Heart right ventricle (tissue), 16 donors: ENCODE measurements at regions of chr1 and their contacts with region 1.

Region 1: DNA sequence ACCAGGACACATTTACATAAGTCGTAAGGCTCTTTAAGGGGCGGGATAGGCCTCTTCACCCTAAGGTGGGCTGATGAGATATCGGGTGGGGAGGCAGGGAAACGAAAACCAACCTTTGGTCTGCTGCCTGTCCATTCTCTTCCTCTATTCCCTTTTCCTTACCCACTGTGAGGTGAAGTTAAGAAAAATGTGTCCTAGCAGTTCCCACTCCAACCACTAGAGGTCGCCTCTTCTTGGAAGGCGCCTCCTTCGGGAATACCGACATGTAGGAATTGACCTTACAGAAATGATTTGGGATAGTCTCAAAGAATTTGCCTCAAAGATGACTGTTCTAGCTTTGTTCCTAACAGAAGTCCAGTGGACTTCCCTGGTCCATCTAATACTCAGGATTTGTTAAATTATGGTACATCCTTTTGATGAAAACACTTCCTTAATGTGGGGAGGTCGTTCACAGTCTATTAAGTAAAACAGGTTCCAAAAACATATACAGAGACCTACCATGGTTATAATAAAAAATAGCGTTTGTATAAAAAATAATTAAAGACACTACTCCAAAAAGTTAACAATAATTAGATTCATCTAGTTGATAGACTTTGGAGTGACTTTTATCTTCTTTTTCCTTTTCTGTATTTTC is 14.1 kb downstream of the AZIN2 start:
- DNase-seq: peak in 1 of 2 donors; percentile 63
- ATAC-seq: peak in 4 of 8 donors; percentile 22 to 55 (median 41)
- H3K4me3 ChIP-seq: no peak overlapping the region
- H3K27ac ChIP-seq: no peak overlapping the region
- H3K4me1 ChIP-seq: peaks cover 0 to 35% (median 7%) of the 10 kb centered on the region in 9 donors
- H3K27me3 ChIP-seq: no peaks in the 10 kb centered on the region
- CTCF ChIP-seq: peak; percentile 92 to 99 (median 98)

Region 2: GRCh38 chr1:33430692-33431593 is 335.9 kb after region 1 on chr1 and contains the start of gene PHC2:
- intact Hi-C with region 1: loop called in 1 of 10 experiments (anchors 10 kb)
- DNase-seq: peak; percentile 97 to 98
- ATAC-seq: peak; percentile 96 to 98 (median 97)
- H3K4me3 ChIP-seq: peak within 1 kb of the TSS; percentile 69 to 95 (median 76)
- H3K27ac ChIP-seq: peak within 1 kb of the TSS; percentile 62 to 89 (median 86)
- H3K4me1 ChIP-seq: peaks cover 0 to 79% (median 50%) of the 10 kb centered on the region in 9 donors
- H3K27me3 ChIP-seq: no peaks in the 10 kb centered on the region
- CTCF ChIP-seq: peak in 8 of 9 donors; percentile 32 to 66 (median 42)
- total RNA-seq, gene PHC2: 96.7 to 136 (median 102) TPM

Region 3: DNA sequence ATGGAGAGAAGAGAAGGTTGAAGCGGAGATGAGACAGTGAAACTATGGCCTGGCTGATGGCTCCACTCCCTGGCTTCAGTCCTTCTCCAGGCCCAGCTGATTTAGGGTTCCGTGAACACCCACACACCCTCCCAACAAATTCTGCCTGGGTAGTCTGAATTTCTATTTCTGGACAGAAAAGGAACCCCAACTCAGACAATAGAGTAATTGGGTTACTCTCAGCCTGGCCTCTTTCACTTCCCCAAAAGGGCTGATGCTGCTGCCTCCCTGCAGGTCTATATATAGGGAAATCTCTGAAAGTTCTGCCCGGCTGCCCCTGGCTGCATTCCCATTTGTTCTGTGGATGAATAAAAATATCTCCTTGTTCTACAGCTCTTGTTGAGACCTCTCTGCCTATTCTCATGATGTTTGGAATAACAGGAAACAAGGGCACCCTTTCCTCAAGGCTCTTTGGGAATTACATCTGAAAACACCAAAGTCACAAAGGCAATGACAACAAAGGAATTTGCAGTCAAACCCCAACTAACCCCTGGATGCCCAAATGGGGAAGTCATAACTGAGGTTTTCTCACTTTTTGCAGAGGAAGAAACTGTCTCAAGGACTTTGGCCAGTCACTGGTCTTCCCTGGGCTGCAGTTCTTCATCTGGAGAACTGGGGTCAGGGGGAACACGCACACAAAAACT is 366.0 kb after region 1 on chr1:
- intact Hi-C with region 1: loop called in 2 of 10 experiments (anchors 5 to 10 kb)
- DNase-seq: peak; percentile 44 to 77
- ATAC-seq: peak; percentile 61 to 87 (median 75)
- H3K4me3 ChIP-seq: no peak overlapping the region
- H3K27ac ChIP-seq: peak overlapping the region; percentile 59 to 93 (median 84)
- H3K4me1 ChIP-seq: peaks cover 2 to 74% (median 35%) of the 10 kb centered on the region in 9 donors
- H3K27me3 ChIP-seq: no peaks in the 10 kb centered on the region
- CTCF ChIP-seq: no peak

Region 4: DNA sequence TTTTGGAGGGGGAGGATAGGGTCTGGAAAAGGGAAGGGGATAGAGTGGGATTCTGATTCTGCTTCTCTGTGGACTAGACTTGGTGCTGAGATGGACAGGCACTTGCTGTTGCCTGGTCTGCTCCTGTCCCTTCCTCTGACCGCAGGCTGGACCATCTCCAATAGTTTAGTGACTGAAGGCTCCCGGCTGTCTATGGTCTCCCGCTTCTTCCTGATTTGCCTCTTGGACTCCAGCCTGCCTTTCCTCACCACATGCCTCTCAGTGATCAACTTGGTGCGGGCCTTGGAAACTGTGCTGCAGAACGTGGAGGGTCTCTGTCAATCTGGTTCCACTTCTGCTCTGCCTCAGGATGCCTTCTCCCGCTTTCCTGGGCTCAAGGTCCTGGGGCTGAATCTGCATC is 371.1 kb after region 1 on chr1:
- intact Hi-C with region 1: loop called in 2 of 10 experiments (anchors 5 to 10 kb)
- DNase-seq: peak in 1 of 2 donors; percentile 60
- ATAC-seq: peak in 4 of 8 donors; percentile 12 to 57 (median 38)
- H3K4me3 ChIP-seq: no peak overlapping the region
- H3K27ac ChIP-seq: peak overlapping the region in 2 of 10 donors; percentile 14 to 15
- H3K4me1 ChIP-seq: peaks cover 0 to 47% (median 28%) of the 10 kb centered on the region in 9 donors
- H3K27me3 ChIP-seq: no peaks in the 10 kb centered on the region
- CTCF ChIP-seq: no peak

Region 5: GRCh38 chr1:33616773-33617172 is 521.7 kb after region 1 on chr1:
- intact Hi-C with region 1: loop called in 5 of 10 experiments (anchors 5 to 10 kb)
- DNase-seq: no peak
- ATAC-seq: peak in 1 of 8 donors; percentile 29
- H3K4me3 ChIP-seq: no peak overlapping the region
- H3K27ac ChIP-seq: no peak overlapping the region
- H3K4me1 ChIP-seq: peaks cover 0 to 6% (median 0%) of the 10 kb centered on the region in 9 donors
- H3K27me3 ChIP-seq: peaks cover 0 to 12% (median 4%) of the 10 kb centered on the region in 7 donors
- CTCF ChIP-seq: no peak